Activated B cell treated with CpG ODN at 0.5 μM for 24 hours (primary cell): ENCODE measurements at regions of chr9 and their contacts with region 1.

Region 1: GRCh38 chr9:5450359-5451091 is at the start of gene CD274:
- DNase-seq: peak; percentile 76
- ATAC-seq: peak; percentile 83
- H3K4me3 Mint-ChIP-seq: peak within 1 kb of the TSS; percentile 95
- H3K27ac Mint-ChIP-seq: peak within 1 kb of the TSS; percentile 96
- H3K4me1 Mint-ChIP-seq: peaks cover 75% of the 10 kb centered on the region
- H3K27me3 Mint-ChIP-seq: no peaks in the 10 kb centered on the region
- CTCF ChIP-seq: no peak
- total RNA-seq, gene CD274: 47.4 and 48.9 TPM in 2 replicates

Region 2: DNA sequence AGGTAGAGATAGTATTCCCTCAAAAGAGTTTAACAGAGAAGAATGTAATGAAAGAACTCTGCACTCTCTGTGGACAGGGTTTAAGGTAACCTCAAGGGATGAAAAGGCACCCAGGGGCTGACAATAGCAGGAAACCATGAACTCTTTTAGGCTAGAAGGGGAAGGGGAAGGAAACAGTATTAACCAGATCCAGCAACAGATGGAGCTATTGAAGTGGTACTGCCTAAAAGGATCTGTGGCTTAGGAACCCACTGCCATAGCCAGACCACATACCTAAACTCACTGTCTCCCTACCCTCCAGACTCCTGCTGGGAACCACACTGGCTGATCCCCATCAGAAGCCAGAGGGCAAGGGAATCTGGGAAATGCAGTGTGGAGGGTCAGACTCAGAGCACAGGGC is 48.3 kb before region 1 on chr9:
- CTCF ChIA-PET with region 1: no interaction called
- POLR2A ChIA-PET with region 1: no interaction called
- intact Hi-C with region 1: no loop called
- DNase-seq: no peak
- ATAC-seq: no peak
- H3K4me3 Mint-ChIP-seq: no peak overlapping the region
- H3K27ac Mint-ChIP-seq: no peak overlapping the region
- H3K4me1 Mint-ChIP-seq: peaks cover 10% of the 10 kb centered on the region
- H3K27me3 Mint-ChIP-seq: no peaks in the 10 kb centered on the region
- CTCF ChIP-seq: no peak

Region 3: DNA sequence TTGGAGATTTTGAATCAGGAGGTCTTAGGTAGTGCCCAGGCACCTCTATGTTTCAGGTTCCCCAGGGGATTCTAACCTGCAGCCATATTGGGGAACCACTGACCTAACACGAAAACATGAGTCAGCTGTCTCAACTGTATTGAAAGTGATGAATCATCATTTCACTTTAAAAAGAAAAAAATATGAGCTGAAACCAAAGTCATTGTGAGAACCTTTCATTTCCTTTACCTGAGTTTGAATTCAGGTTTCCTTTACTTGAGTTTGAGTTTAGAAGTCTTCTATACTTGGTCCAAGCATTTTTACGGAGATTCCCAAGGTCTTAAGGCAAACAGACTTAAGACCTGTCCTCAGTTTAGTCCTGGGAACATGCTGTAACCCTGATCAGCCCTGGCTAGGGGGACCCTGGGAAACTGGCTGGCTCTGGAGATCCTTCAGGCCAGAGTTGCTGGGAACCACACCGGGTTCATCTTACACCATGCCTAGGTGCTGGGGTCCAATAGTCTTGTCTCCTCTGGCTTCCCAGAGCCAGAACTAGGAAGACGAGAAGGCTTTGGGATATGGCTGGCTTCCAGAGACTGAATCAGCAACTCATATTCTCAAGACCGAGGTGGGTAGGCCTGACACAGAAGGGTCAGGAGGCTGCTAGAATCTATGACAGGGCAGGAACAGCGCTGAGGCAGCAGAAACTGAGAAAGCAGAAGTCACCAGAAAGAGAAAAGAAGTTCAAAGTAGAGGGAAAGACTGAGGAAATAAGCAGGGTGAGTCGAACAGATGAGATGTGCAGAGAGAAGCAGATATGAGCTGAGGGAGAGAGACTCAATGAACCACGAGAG is 43.4 kb after region 1 on chr9:
- CTCF ChIA-PET with region 1: interaction called, 4 read pairs
- POLR2A ChIA-PET with region 1: interaction called, 4 read pairs
- intact Hi-C with region 1: loop called (anchors 5 kb)
- DNase-seq: no peak
- ATAC-seq: peak; percentile 78
- H3K4me3 Mint-ChIP-seq: peak overlapping the region; percentile 3
- H3K27ac Mint-ChIP-seq: peak overlapping the region; percentile 54
- H3K4me1 Mint-ChIP-seq: peaks cover 17% of the 10 kb centered on the region
- H3K27me3 Mint-ChIP-seq: no peaks in the 10 kb centered on the region
- CTCF ChIP-seq: no peak

Region 4: DNA sequence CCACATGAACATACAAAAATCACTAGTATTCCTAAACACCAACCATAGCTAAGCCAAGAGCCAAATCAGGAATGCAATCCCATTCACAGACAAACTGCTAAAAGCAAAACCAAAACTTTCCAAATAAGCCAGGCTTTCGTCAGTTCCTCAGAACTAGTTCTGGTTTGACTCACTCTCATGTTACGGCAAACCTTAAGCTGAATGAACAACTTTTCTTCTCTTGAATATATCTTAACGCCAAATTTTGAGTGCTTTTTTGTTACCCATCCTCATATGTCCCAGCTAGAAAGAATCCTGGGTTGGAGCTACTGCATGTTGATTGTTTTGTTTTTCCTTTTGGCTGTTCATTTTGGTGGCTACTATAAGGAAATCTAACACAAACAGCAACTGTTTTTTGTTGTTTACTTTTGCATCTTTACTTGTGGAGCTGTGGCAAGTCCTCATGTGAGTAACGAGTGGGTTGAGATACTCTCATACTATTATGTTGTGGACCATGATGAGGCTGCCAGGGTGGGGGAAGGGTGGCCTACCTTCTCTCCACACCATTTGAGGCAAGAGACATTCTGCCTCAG is 59.9 kb after region 1 on chr9 and contains the start of gene PDCD1LG2:
- CTCF ChIA-PET with region 1: interaction called, 9 read pairs
- POLR2A ChIA-PET with region 1: interaction called, 6 read pairs
- intact Hi-C with region 1: loop called (anchors 5 kb)
- DNase-seq: no peak
- ATAC-seq: peak; percentile 79
- H3K4me3 Mint-ChIP-seq: peak within 1 kb of the TSS; percentile 77
- H3K27ac Mint-ChIP-seq: peak within 1 kb of the TSS; percentile 89
- H3K4me1 Mint-ChIP-seq: peaks cover 55% of the 10 kb centered on the region
- H3K27me3 Mint-ChIP-seq: no peaks in the 10 kb centered on the region
- CTCF ChIP-seq: no peak
- total RNA-seq, gene PDCD1LG2: 2.1 and 2.8 TPM in 2 replicates

Region 5: DNA sequence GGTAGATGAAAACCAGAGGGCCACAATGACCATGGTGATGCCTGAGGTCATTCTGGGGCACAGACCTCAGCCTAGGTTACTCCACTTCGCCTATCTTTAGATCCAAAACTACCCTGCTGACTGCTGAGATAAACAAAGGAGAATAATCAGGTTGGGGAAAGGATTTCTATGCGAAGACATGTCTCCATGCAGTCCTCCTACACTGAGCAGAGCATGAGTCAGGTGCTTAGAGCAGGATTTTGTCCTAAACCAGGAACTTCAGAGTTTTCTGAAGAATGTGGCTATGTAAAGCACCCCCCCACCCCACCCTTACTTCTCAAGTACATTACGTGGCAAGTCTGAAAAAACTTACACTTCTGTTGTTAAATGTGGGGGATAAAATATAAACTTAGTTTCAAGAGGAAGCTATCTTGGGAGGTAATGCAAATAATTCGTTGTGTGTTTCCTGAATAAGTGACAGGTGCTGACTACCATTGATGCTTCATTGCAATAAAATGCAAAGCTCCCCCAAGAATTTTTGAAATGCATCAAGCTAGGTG is 79.2 kb after region 1 on chr9:
- CTCF ChIA-PET with region 1: interaction called, 3 read pairs
- POLR2A ChIA-PET with region 1: interaction called, 18 read pairs
- intact Hi-C with region 1: loop called (anchors 5 kb)
- DNase-seq: no peak
- ATAC-seq: peak; percentile 57
- H3K4me3 Mint-ChIP-seq: peak overlapping the region; percentile 60
- H3K27ac Mint-ChIP-seq: peak overlapping the region; percentile 51
- H3K4me1 Mint-ChIP-seq: peaks cover 57% of the 10 kb centered on the region
- H3K27me3 Mint-ChIP-seq: no peaks in the 10 kb centered on the region
- CTCF ChIP-seq: no peak

Region 6: GRCh38 chr9:5593904-5594303 is 143.4 kb after region 1 on chr9:
- CTCF ChIA-PET with region 1: interaction called, 90 read pairs
- POLR2A ChIA-PET with region 1: interaction called, 178 read pairs
- intact Hi-C with region 1: loop called (anchors 1 kb)
- DNase-seq: no peak
- ATAC-seq: peak; percentile 32
- H3K4me3 Mint-ChIP-seq: peak overlapping the region; percentile 70
- H3K27ac Mint-ChIP-seq: peak overlapping the region; percentile 98
- H3K4me1 Mint-ChIP-seq: peaks cover 94% of the 10 kb centered on the region
- H3K27me3 Mint-ChIP-seq: no peaks in the 10 kb centered on the region
- CTCF ChIP-seq: no peak

Region 7: GRCh38 chr9:5714501-5715401 is 264.2 kb after region 1 on chr9:
- CTCF ChIA-PET with region 1: interaction called, 3 read pairs
- POLR2A ChIA-PET with region 1: no interaction called
- intact Hi-C with region 1: loop called (anchors 5 kb)
- DNase-seq: no peak
- ATAC-seq: no peak
- H3K4me3 Mint-ChIP-seq: no peak overlapping the region
- H3K27ac Mint-ChIP-seq: no peak overlapping the region
- H3K4me1 Mint-ChIP-seq: peaks cover 36% of the 10 kb centered on the region
- H3K27me3 Mint-ChIP-seq: no peaks in the 10 kb centered on the region
- CTCF ChIP-seq: no peak

Region 8: DNA sequence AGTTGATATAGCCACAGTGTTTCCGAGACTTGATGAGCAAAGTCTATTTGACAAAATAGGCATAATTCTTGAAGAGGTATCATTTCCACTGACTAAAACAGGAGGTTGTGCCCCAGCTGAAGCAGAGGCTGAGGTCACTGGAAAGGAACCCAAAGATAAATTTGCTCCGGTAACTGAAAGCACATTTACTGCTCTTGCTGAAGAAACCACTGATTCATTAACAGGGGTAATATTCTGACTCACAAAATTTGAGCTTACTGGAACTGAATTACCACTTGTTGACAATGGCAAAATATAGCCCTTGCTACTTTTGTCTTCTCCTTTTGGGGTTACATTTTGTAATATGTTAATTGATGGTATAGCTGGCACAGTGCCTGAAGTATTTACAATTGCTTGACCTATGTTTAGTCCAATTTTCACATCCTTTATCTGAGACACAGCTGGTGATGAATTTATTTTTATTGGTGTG is 470.4 kb after region 1 on chr9:
- CTCF ChIA-PET with region 1: no interaction called
- POLR2A ChIA-PET with region 1: no interaction called
- intact Hi-C with region 1: no loop called
- DNase-seq: no peak
- ATAC-seq: no peak
- H3K4me3 Mint-ChIP-seq: no peak overlapping the region
- H3K27ac Mint-ChIP-seq: no peak overlapping the region
- H3K4me1 Mint-ChIP-seq: peaks cover 2% of the 10 kb centered on the region
- H3K27me3 Mint-ChIP-seq: no peaks in the 10 kb centered on the region
- CTCF ChIP-seq: no peak